ENCODE measurements at regions of chr5 and their contacts with region 1.

Region 1: DNA sequence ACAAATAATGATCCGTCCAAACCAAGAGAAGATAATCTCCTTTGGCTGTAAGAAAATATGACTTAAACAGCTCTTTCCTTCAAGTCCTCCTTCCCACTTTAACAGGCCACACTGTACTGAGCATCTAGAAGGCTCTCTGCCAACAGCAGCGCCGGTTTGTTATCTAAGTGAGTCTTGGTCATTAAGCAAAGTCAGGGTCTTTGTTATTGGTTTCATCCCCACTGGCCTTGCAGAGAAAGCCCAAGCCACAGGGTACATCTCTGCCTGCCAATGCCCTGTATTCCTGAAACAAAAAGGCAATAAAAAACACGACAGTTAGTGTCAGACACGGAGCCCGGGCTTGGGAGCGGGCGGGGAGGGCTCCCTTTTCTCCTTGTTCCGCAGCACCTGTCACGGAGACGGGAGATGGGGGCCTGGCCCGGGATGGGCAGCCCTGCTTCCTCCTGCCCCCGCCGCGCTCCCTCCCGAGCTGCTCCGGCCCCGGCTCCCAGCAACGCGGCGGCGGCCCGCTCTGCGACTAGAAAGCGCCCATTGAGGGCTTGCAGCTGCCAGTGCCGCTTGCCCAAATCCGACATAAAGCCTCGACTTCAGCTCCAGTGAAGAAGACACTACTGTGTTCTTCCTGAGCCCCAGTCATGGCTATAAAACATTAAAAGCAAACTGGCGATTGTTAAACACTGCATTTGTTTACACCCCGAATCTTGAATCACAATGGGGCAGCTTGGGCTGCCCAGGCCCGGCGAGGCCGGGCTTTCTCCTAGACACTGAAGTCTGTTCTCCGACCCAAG is 28.1 kb upstream of the PIK3R1 start:
- DNase-seq: no peak
- ATAC-seq: no peak
- H3K4me3 Mint-ChIP-seq: no peak overlapping the region
- H3K27ac Mint-ChIP-seq: no peak overlapping the region
- H3K4me1 Mint-ChIP-seq: peaks cover 7% of the 10 kb centered on the region
- H3K27me3 Mint-ChIP-seq: no peaks in the 10 kb centered on the region
- CTCF ChIP-seq: no peak

Region 2: GRCh38 chr5:67530609-67531255 is 656.7 kb before region 1 on chr5:
- CTCF ChIA-PET with region 1: no interaction called
- POLR2A ChIA-PET with region 1: interaction called, 10 read pairs
- intact Hi-C with region 1: no loop called
- DNase-seq: no peak
- ATAC-seq: no peak
- H3K4me3 Mint-ChIP-seq: no peak overlapping the region
- H3K27ac Mint-ChIP-seq: no peak overlapping the region
- H3K4me1 Mint-ChIP-seq: peaks cover 12% of the 10 kb centered on the region
- H3K27me3 Mint-ChIP-seq: no peaks in the 10 kb centered on the region
- CTCF ChIP-seq: no peak

Region 3: DNA sequence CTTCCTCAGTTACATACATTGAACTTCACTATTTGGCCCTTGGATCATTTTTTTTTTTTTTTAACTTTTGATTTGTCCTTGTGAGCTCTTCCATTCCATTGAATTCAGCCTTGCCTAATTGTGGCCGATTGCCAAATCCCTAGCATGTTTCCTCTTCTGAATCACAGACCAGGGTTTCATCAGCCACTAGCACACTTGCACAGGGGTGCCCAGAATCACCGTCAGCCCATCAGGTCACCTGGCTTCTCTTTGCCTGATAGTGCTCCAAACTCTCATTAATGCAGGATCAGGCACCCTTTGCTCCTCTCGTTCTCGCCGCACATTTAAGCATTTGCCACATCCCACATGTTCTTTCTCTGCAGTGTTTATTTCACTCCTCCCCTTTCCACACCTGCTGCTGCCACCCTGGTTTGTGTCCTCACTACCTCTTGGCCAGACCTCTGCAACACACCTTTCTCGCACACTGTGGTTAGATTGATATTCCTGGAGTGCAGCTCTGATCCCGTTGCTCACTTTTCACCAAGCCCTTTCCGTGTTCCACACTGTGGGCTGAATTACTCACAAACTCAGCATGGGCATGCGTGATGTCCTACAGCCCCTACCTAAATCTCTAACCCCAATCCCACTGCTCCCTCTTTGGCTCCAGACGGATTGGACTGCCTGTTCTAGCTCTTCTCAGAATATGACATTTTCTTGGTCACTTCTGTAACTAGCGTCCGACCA is 37.9 kb after region 1 on chr5:
- CTCF ChIA-PET with region 1: no interaction called
- POLR2A ChIA-PET with region 1: no interaction called
- intact Hi-C with region 1: no loop called
- DNase-seq: no peak
- ATAC-seq: no peak
- H3K4me3 Mint-ChIP-seq: no peak overlapping the region
- H3K27ac Mint-ChIP-seq: no peak overlapping the region
- H3K4me1 Mint-ChIP-seq: peaks cover 60% of the 10 kb centered on the region
- H3K27me3 Mint-ChIP-seq: no peaks in the 10 kb centered on the region
- CTCF ChIP-seq: no peak